Activated CD4-positive, alpha-beta T cell treated with anti-CD3 and anti-CD28 coated beads for 36 hours (primary cell): ENCODE measurements at regions of chr2 and their contacts with region 1.

Region 1: DNA sequence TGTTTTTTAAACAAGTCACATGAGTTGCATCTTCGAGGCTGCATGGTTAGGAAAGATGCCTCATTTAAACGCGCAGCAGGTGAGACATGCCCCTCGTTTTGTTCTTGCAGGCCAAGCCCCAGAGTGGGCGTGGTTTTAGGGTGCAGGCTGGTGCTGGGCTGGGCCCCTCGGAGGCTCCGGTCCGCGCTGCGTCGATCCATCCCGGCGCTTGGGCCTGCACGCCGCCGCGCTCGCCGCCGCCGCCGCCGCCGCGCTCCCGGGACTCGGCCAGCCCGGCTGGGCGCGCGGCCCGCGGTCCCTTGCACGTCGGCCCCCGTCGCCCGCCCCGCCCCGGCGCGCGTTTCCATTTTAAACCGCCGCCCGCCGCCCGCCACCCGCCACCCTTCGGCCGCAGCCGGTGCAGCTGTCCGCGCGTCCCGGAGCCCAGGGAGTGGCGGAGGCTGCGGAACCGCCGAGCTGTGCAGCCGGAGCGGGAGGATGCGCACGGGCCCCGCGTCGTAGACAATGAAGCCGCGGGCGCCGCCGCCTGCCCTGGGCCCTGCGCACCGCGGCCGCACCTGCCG is 175.5 kb downstream of the AGAP1 start:
- DNase-seq: peak; percentile 60
- ATAC-seq: peak; percentile 61
- H3K4me3 Mint-ChIP-seq: no peak overlapping the region
- H3K27ac Mint-ChIP-seq: no peak overlapping the region
- H3K4me1 Mint-ChIP-seq: peaks cover 7% of the 10 kb centered on the region
- H3K27me3 Mint-ChIP-seq: peaks cover 54% of the 10 kb centered on the region

Region 2: GRCh38 chr2:235494716-235495372 is 174.5 kb before region 1 on chr2:
- CTCF ChIA-PET with region 1: no interaction called
- POLR2A ChIA-PET with region 1: no interaction called
- intact Hi-C with region 1: loop called in 1 of 2 experiments (anchors 5 kb)
- DNase-seq: peak; percentile 31
- ATAC-seq: peak; percentile 53
- H3K4me3 Mint-ChIP-seq: peak overlapping the region; percentile 44
- H3K27ac Mint-ChIP-seq: no peak overlapping the region
- H3K4me1 Mint-ChIP-seq: peaks cover 4% of the 10 kb centered on the region
- H3K27me3 Mint-ChIP-seq: peaks cover 53% of the 10 kb centered on the region

Region 3: GRCh38 chr2:235781775-235782174 is 112.4 kb after region 1 on chr2:
- CTCF ChIA-PET with region 1: no interaction called
- POLR2A ChIA-PET with region 1: no interaction called
- intact Hi-C with region 1: no loop called
- DNase-seq: no peak
- ATAC-seq: no peak
- H3K4me3 Mint-ChIP-seq: no peak overlapping the region
- H3K27ac Mint-ChIP-seq: no peak overlapping the region
- H3K4me1 Mint-ChIP-seq: no peaks in the 10 kb centered on the region
- H3K27me3 Mint-ChIP-seq: peaks cover 25% of the 10 kb centered on the region

Region 4: GRCh38 chr2:236168110-236169067 is 499.0 kb after region 1 on chr2 and contains the start of gene GBX2:
- CTCF ChIA-PET with region 1: no interaction called
- POLR2A ChIA-PET with region 1: no interaction called
- intact Hi-C with region 1: loop called (anchors 5 to 10 kb)
- DNase-seq: peak; percentile 49
- ATAC-seq: peak; percentile 53
- H3K4me3 Mint-ChIP-seq: peak within 1 kb of the TSS; percentile 12
- H3K27ac Mint-ChIP-seq: no peak within 1 kb of the TSS
- H3K4me1 Mint-ChIP-seq: peaks cover 11% of the 10 kb centered on the region
- H3K27me3 Mint-ChIP-seq: peaks cover 57% of the 10 kb centered on the region
- total RNA-seq, gene GBX2: not detected